H1 (cell line): ENCODE measurements at regions of chr19 and their contacts with region 1.

Region 1: GRCh38 chr19:57914531-57914930 is 1.9 kb downstream of the ZNF417 start:
- DNase-seq: no peak
- H3K4me3 ChIP-seq: no peak overlapping the region
- H3K27ac ChIP-seq: no peak overlapping the region
- H3K4me1 ChIP-seq: peaks cover 0 to 1% (median 0%) of the 10 kb centered on the region in 4 experiments; a peak in 1 of 7 replicates
- H3K27me3 ChIP-seq: no peaks in the 10 kb centered on the region
- CTCF ChIP-seq: no peak
- EP300 ChIP-seq: no peak
- POLR2A ChIP-seq: no peak
- RAD21 ChIP-seq: no peak

Region 2: GRCh38 chr19:57803594-57804325 is 110.8 kb before region 1 on chr19:
- CTCF ChIA-PET with region 1: no interaction called
- POLR2A ChIA-PET with region 1: no interaction called
- DNase-seq: peak in 1 of 2 experiments; percentile 78
- H3K4me3 ChIP-seq: peak overlapping the region; percentile 49 to 90 (median 74)
- H3K27ac ChIP-seq: peak overlapping the region; percentile 93
- H3K4me1 ChIP-seq: peaks cover 7 to 23% (median 14%) of the 10 kb centered on the region in 4 experiments
- H3K27me3 ChIP-seq: no peaks in the 10 kb centered on the region
- CTCF ChIP-seq: no peak
- EP300 ChIP-seq: peak in 1 of 2 experiments; percentile 70; a peak in 1 of 3 replicates
- POLR2A ChIP-seq: peak in 1 of 2 experiments; percentile 72
- RAD21 ChIP-seq: no peak

Region 3: GRCh38 chr19:57903618-57904184 is 10.8 kb before region 1 on chr19:
- CTCF ChIA-PET with region 1: interaction called, 5 read pairs
- POLR2A ChIA-PET with region 1: interaction called, 23 read pairs
- DNase-seq: no peak
- H3K4me3 ChIP-seq: no peak overlapping the region
- H3K27ac ChIP-seq: no peak overlapping the region
- H3K4me1 ChIP-seq: no peaks in the 10 kb centered on the region
- H3K27me3 ChIP-seq: no peaks in the 10 kb centered on the region
- CTCF ChIP-seq: no peak
- EP300 ChIP-seq: no peak
- POLR2A ChIP-seq: no peak
- RAD21 ChIP-seq: no peak

Region 4: DNA sequence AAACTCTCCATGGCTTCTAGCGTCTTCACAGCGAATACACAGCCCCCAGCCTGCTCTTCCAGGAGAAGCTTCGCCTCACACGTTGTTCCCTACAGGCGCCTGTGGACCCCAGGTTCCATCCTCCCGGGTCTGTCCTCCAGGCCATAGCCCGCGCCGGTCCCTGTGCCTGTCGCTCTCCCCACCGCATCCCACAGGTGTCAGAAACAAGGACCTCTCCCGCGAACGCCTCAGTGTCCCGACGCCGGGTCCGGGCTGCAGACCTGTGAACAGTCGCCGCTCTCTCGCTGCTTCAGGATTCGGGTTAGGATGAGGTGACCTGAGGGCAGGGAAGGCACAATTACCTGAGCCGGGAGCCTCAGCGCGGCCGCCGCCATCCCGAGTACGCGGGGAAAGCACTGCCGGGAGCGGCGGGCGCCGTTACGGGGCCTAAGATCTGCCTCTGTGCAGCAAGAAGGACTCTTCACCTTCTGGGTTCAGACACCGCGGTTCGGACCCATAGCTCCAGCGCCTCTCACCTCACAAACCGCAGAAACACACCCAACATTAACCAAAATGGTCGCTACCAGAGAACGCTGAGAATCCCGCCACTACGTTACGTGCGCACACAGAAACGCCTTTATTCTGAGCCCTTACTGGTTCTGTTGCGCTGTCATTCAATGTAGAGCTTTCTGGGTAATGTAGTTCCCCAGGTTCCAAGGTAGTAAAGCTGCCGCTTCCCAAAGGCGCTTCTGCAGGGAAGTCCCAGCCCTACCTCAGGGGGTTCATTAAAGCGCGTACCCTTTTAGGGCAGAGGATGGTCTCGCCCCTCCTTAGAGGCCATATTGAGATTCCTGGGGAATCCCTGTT is 20.5 kb after region 1 on chr19 and contains the start of gene ZNF418:
- CTCF ChIA-PET with region 1: interaction called, 5 read pairs
- POLR2A ChIA-PET with region 1: interaction called, 20 read pairs
- DNase-seq: peak; percentile 60 to 72
- H3K4me3 ChIP-seq: peak within 1 kb of the TSS; percentile 85 to 95 (median 94)
- H3K27ac ChIP-seq: peak within 1 kb of the TSS; percentile 94
- H3K4me1 ChIP-seq: peaks cover 0 to 6% (median 3%) of the 10 kb centered on the region in 4 experiments; a peak in 4 of 7 replicates
- H3K27me3 ChIP-seq: no peaks in the 10 kb centered on the region
- CTCF ChIP-seq: no peak
- EP300 ChIP-seq: peak in 1 of 2 experiments; percentile 89; a peak in 2 of 3 replicates
- POLR2A ChIP-seq: peak; percentile 87 to 89
- RAD21 ChIP-seq: no peak
- total RNA-seq, gene ZNF418: 18.5 and 18.8 TPM in 2 replicates

Region 5: DNA sequence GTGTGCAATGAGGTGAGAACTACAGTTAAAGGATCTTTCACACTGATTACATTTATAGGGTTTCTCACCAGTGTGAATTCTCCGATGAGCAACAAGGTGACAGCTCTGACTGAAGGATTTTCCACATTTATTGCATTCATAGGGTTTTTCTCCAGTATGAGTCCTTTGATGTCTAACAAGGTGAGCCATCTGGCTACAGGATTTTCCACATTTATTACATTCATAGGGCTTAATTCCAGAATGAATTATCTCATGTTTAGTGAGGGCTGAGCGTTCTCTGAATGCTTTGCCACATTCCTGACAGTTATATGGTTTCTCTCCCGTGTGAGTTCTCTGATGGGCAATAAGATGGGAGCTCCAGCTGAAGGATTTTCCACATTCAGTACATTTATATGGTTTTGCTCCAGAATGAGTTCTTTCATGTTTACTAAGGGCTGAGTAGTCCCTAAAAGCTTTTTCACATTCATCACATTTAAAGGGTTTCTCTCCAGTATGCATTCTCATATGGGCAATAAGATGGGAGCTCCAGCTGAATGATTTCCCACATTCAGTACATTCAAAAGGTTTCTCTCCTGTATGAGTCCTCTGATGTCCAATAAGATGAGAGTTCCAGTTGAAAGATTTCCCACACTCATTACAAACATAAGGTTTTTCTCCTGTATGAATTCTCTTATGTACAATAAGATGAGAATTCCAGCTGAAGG is 64.2 kb after region 1 on chr19:
- CTCF ChIA-PET with region 1: no interaction called
- POLR2A ChIA-PET with region 1: no interaction called
- DNase-seq: no peak
- H3K4me3 ChIP-seq: no peak overlapping the region; a peak in 1 of 8 replicates
- H3K27ac ChIP-seq: no peak overlapping the region
- H3K4me1 ChIP-seq: no peaks in the 10 kb centered on the region
- H3K27me3 ChIP-seq: no peaks in the 10 kb centered on the region
- CTCF ChIP-seq: no peak
- EP300 ChIP-seq: no peak
- POLR2A ChIP-seq: no peak
- RAD21 ChIP-seq: no peak

Region 6: DNA sequence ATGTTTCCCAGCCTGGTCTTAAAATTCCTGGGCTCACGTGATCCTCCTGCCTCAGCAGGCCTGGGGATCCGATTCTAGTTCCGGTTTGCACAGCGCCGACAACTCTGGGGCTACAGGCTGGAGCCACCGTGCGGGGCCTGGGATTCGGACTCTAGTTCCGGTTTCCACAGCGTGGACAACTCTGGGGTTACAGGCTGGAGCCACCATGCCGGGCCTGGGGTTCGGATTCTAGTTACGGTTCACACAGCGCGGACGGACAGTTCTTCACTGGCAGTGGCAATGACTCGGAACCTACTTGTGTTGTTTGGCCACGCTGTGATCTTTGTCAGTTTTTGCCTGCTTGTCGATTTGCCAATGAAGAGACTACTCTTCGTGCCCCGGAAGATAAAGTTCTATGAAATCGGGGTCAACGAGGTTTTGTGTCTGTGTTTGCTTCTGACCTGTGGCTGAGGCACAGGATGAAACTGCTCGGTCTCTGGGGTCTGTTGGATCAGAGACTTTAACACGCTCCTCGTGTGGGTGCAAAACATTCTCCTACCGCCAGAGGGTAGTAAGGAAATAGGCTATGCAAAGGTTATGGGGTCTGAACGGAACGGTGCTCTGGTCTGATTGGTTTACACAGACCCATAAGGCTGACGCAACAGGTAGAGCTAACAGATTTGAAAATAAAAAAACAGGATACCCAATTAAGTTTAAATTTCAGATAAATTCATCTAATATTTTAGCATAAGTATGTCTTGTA is 107.2 kb after region 1 on chr19:
- CTCF ChIA-PET with region 1: no interaction called
- POLR2A ChIA-PET with region 1: no interaction called
- DNase-seq: peak in 1 of 2 experiments; percentile 72
- H3K4me3 ChIP-seq: no peak overlapping the region
- H3K27ac ChIP-seq: no peak overlapping the region
- H3K4me1 ChIP-seq: no peaks in the 10 kb centered on the region
- H3K27me3 ChIP-seq: no peaks in the 10 kb centered on the region; a peak in 3 of 7 replicates
- CTCF ChIP-seq: peak; percentile 46 to 84 (median 71)
- EP300 ChIP-seq: no peak
- POLR2A ChIP-seq: no peak
- RAD21 ChIP-seq: peak; percentile 88 to 91